ENCODE measurements at regions of chr11 and their contacts with region 1.

Region 1: GRCh38 chr11:111982019-111982464 is 43.2 kb upstream of the DLAT start:
- ATAC-seq: no peak
- H3K4me3 ChIP-seq: no peak overlapping the region
- H3K27ac ChIP-seq: no peak overlapping the region
- H3K4me1 ChIP-seq: peaks cover 32 to 33% of the 10 kb centered on the region in 2 donors

Region 2: GRCh38 chr11:111446404-111447111 is 535.5 kb before region 1 on chr11:
- in situ Hi-C with region 1: no loop called
- ATAC-seq: peak; percentile 89 to 100 (median 100)
- H3K4me3 ChIP-seq: no peak overlapping the region
- H3K27ac ChIP-seq: no peak overlapping the region
- H3K4me1 ChIP-seq: no peaks in the 10 kb centered on the region

Region 3: GRCh38 chr11:111531687-111532364 is 450.2 kb before region 1 on chr11:
- in situ Hi-C with region 1: no loop called
- ATAC-seq: peak; percentile 35 to 100 (median 62)
- H3K4me3 ChIP-seq: no peak overlapping the region
- H3K27ac ChIP-seq: no peak overlapping the region
- H3K4me1 ChIP-seq: peaks cover 0 to 3% of the 10 kb centered on the region in 2 donors

Region 4: GRCh38 chr11:111878849-111879636 is 103.0 kb before region 1 on chr11 and contains the starts of genes CFAP68 and FDXACB1:
- in situ Hi-C with region 1: loop called in 2 of 9 experiments (anchors 10 to 25 kb)
- ATAC-seq: peak; percentile 86 to 91 (median 89)
- H3K4me3 ChIP-seq: peak within 1 kb of the TSS; percentile 53 to 63 (median 58)
- H3K27ac ChIP-seq: peak within 1 kb of the TSS; percentile 94 to 97
- H3K4me1 ChIP-seq: peaks cover 10 to 11% of the 10 kb centered on the region in 2 donors
- total RNA-seq, gene CFAP68: 25.9 to 72.1 (median 34.5) TPM
- total RNA-seq, gene FDXACB1: 2.6 to 4.8 (median 3.5) TPM

Region 5: DNA sequence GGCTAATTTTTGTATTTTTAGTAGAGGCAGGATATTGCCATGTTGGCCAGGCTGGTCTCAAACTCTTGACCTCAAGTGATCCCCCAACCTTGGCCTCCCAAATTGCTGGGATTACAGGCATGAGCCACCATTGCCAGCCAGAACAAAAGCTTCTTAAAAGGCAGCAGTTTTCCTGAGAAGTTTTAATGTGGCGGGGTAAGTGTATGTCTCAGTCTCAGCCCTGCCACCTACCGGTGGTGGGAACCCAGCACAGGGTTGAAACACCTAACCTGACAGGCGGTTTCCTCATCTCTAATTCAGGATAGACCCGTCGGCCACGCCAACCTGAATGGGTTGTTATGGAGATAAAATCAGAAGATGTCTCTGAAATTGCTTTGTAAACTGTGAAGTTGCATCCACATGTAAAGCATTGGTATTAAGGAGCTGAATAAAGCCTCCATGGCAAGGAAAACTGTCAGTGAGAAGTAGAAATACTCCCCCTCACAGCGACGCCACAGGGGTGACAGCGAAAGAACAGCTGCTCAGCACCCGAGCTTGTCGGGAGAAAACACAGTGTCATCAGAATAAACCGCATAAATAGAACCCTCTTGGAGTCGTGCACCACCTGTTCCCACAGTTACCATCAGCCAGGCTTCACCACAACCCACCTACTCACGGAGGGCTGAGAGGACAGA is 813.2 kb after region 1 on chr11:
- in situ Hi-C with region 1: no loop called
- ATAC-seq: peak in 3 of 8 experiments; percentile 47 to 67 (median 58)
- H3K4me3 ChIP-seq: no peak overlapping the region
- H3K27ac ChIP-seq: peak overlapping the region; percentile 64 to 65
- H3K4me1 ChIP-seq: peaks cover 67 to 82% of the 10 kb centered on the region in 2 donors